GM18951 (cell line): ENCODE measurements at regions of chr20 and their contacts with region 1.

Region 1: GRCh38 chr20:51372176-51372803 is 170.2 kb downstream of the NFATC2 start:
- POLR2A ChIP-seq: no peak

Region 2: DNA sequence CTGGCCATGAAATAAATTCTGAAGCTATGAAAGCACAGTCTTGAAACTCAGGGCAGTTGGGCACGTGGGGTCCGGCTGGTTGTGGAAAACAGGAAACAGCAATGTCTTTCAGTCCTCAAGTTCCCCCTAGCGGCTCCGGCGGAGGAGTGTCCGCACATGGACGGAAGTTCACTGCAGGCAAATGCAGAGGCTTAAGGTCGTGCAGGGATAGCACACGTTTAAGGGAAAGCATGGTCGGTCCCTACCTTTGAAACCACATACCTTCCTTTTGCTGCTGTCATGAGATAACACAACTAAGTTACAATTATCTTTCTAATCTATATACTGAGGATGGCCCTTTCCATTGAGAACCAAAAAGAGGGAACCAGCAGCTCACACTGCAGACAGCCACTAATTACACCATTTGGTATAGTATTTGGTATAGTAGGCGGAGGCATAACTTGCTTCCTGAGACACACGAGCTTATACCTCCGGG is 222.8 kb after region 1 on chr20:
- in situ Hi-C with region 1: loop called (anchors 10 kb)
- POLR2A ChIP-seq: no peak